MCF 10A (cell line): ENCODE measurements at regions of chr9 and their contacts with region 1.

Region 1: DNA sequence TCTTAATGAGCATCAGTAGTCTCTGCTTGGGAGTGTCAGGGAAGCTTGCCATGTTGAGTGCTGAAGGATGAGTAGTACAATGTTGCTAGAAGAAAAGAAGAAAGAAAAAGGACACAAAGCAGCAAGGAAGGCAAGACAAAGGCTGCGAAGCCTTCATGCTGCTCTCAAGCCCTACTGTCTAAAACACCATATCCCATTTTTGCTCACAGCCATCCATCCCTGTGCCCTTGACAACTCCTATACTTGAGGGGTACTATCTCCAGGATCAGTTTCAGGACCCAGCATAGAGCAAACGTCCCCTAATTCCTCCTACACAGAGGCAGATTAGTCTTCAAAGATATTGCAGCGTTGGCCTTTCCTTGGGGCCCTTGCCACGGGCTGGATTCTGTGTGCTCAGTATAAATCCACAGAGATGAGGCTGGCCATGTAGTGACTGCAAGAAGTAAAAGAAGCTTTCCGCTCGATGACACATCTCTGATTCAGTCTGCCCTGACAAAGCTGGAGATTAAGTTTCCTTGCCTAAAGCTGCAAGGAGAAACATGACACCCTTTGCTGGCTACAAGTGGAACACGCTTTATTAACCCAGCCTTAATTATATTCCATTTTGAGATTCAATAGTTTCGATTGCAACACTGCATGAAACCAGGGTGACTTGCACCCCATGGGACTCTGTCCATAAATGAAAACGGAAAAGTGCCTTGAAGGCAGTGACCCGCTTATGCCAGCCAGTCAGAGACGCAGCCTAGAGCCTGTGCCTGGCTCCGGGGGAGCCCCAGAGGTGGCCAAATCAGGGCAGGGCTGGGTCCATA is 304.6 kb downstream of the ACTL7B start:
- DNase-seq: peak; percentile 97
- H3K4me3 Mint-ChIP-seq: peak overlapping the region; percentile 53
- H3K27ac Mint-ChIP-seq: peak overlapping the region; percentile 91
- H3K4me1 Mint-ChIP-seq: peaks cover 37% of the 10 kb centered on the region
- H3K27me3 Mint-ChIP-seq: no peaks in the 10 kb centered on the region
- CTCF ChIP-seq: no peak

Region 2: GRCh38 chr9:108444400-108445358 is 106.6 kb before region 1 on chr9:
- CTCF ChIA-PET with region 1: interaction called, 6 read pairs
- POLR2A ChIA-PET with region 1: interaction called, 18 read pairs
- intact Hi-C with region 1: no loop called
- DNase-seq: peak; percentile 88
- H3K4me3 Mint-ChIP-seq: peak overlapping the region; percentile 62
- H3K27ac Mint-ChIP-seq: peak overlapping the region; percentile 63
- H3K4me1 Mint-ChIP-seq: peaks cover 40% of the 10 kb centered on the region
- H3K27me3 Mint-ChIP-seq: no peaks in the 10 kb centered on the region
- CTCF ChIP-seq: no peak

Region 3: GRCh38 chr9:108478431-108478837 is 72.8 kb before region 1 on chr9:
- CTCF ChIA-PET with region 1: interaction called, 10 read pairs
- POLR2A ChIA-PET with region 1: interaction called, 139 read pairs
- intact Hi-C with region 1: loop called (anchors 1 kb)
- DNase-seq: peak; percentile 97
- H3K4me3 Mint-ChIP-seq: peak overlapping the region; percentile 37
- H3K27ac Mint-ChIP-seq: peak overlapping the region; percentile 89
- H3K4me1 Mint-ChIP-seq: peaks cover 47% of the 10 kb centered on the region
- H3K27me3 Mint-ChIP-seq: no peaks in the 10 kb centered on the region
- CTCF ChIP-seq: no peak

Region 4: GRCh38 chr9:108484468-108484867 is 66.8 kb before region 1 on chr9:
- CTCF ChIA-PET with region 1: interaction called, 4 read pairs
- POLR2A ChIA-PET with region 1: interaction called, 139 read pairs
- intact Hi-C with region 1: loop called (anchors 2 kb)
- DNase-seq: peak; percentile 56
- H3K4me3 Mint-ChIP-seq: no peak overlapping the region
- H3K27ac Mint-ChIP-seq: no peak overlapping the region
- H3K4me1 Mint-ChIP-seq: peaks cover 9% of the 10 kb centered on the region
- H3K27me3 Mint-ChIP-seq: no peaks in the 10 kb centered on the region
- CTCF ChIP-seq: no peak